Body of pancreas (tissue), 4 donors: ENCODE measurements at regions of chr1 and their contacts with region 1.

Region 1: DNA sequence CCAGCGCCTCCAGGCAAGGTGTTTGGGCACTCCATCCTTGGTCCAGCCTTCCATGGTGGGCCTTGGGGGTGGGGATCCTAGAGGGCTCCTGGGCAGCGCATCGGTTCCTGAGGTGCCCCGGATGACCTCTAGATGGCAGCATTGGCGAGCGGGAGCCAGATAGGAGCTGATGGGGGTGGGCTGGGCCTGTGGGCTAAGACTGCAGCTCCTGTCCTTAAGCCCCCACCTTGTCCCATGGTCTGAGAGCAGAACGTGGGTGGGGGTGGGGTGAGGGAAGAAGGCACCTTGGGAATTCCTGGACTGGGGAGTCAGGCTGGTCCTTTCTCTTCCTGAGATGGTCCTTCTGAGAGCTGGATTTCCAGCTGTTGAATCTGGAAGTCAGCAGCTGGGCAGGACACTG is 93.4 kb upstream of the CSF3R start:
- DNase-seq: peak; percentile 37 to 60 (median 50)
- ATAC-seq: peak; percentile 27
- H3K4me3 ChIP-seq: no peak overlapping the region
- H3K27ac ChIP-seq: no peak overlapping the region
- H3K4me1 ChIP-seq: no peaks in the 10 kb centered on the region
- H3K27me3 ChIP-seq: no peaks in the 10 kb centered on the region
- CTCF ChIP-seq: peak; percentile 58 to 78 (median 62)
- POLR2A ChIP-seq: no peak

Region 2: GRCh38 chr1:36542962-36543515 is 33.1 kb before region 1 on chr1:
- intact Hi-C with region 1: no loop called
- DNase-seq: no peak
- ATAC-seq: no peak
- H3K4me3 ChIP-seq: no peak overlapping the region
- H3K27ac ChIP-seq: no peak overlapping the region
- H3K4me1 ChIP-seq: no peaks in the 10 kb centered on the region
- H3K27me3 ChIP-seq: no peaks in the 10 kb centered on the region
- CTCF ChIP-seq: no peak
- POLR2A ChIP-seq: no peak

Region 3: DNA sequence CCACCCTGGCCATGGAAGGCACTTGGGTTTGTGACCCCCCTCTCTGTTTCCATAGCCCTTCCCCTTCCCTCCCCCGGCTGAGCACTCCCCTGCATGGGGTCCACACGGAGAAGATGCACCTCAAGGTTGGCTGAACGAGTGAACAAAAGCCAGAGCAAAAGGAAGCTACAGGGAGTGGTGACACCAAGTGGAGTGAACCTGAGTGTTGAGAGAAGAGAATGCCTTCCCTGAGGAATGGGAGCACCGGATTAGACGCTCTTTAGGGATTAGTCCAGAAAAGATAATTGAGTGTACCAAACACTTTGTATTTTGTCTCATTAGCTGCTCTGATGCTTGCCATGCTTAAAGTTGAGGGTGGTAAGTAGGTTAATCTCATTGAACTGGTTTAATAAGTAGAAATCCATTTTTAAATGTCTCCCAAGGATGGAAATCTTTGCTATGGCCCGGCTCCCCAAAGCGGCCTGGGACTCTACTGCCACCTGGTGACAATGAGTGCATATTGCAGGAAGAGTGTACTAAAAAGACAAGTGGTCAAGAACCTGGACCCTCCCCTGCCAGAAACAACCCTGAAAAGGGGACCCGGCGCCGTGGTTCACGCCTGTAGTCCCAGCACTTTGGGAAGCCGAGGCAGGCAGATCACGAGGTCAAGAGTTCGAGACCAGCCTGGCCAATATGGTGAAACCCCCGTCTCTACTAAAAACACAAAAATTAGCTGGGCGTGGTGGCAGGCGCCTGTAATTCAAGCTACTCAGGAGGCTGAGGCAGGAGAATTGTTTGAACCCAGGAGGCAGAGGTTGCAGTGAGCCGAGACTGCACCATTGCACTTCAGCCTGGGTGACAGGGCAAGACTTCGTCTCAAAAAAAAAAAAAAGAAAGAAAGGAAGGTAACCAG is 747.6 kb after region 1 on chr1:
- intact Hi-C with region 1: loop called (anchors 10 kb)
- DNase-seq: peak in 2 of 4 donors; percentile 21 to 30
- ATAC-seq: no peak
- H3K4me3 ChIP-seq: no peak overlapping the region
- H3K27ac ChIP-seq: no peak overlapping the region
- H3K4me1 ChIP-seq: no peaks in the 10 kb centered on the region
- H3K27me3 ChIP-seq: no peaks in the 10 kb centered on the region
- CTCF ChIP-seq: peak; percentile 34 to 68 (median 58)
- POLR2A ChIP-seq: no peak

Region 4: GRCh38 chr1:37434292-37434907 is 858.3 kb after region 1 on chr1:
- intact Hi-C with region 1: loop called (anchors 10 kb)
- DNase-seq: peak; percentile 58 to 79 (median 70)
- ATAC-seq: peak; percentile 75
- H3K4me3 ChIP-seq: no peak overlapping the region
- H3K27ac ChIP-seq: no peak overlapping the region
- H3K4me1 ChIP-seq: no peaks in the 10 kb centered on the region
- H3K27me3 ChIP-seq: peaks cover 0 to 8% of the 10 kb centered on the region in 2 donors
- CTCF ChIP-seq: peak; percentile 70 to 88 (median 81)
- POLR2A ChIP-seq: no peak